ENCODE measurements at regions of chr11 and their contacts with region 1.

Region 1: DNA sequence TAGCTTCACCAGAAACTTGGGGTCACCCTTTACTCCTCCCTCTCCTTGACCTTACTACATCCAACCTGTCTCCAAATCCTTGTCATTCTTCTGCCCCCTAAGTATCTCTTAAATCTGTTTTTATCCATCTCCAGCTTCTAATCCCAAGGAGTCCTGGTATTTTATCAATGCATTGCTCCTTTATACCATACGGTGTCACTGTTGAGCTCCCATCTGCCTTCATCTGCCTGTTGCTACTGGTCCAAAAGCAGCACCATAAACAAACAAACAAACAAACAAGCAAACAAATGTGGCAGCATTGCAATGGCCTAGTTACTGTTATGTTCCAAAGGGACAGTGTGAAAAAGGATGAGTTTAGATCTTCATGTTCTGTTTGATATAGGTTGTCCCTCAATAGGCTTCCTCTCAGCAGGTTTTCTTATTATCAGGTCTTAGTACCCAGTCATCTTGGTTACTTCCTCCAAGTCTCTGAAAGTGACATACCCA is 34.2 kb downstream of the DNHD1 start:
- DNase-seq: no peak
- ATAC-seq: peak; percentile 84
- H3K4me3 Mint-ChIP-seq: no peak overlapping the region
- H3K27ac Mint-ChIP-seq: no peak overlapping the region
- H3K4me1 Mint-ChIP-seq: peaks cover 7% of the 10 kb centered on the region
- H3K27me3 Mint-ChIP-seq: no peaks in the 10 kb centered on the region

Region 2: DNA sequence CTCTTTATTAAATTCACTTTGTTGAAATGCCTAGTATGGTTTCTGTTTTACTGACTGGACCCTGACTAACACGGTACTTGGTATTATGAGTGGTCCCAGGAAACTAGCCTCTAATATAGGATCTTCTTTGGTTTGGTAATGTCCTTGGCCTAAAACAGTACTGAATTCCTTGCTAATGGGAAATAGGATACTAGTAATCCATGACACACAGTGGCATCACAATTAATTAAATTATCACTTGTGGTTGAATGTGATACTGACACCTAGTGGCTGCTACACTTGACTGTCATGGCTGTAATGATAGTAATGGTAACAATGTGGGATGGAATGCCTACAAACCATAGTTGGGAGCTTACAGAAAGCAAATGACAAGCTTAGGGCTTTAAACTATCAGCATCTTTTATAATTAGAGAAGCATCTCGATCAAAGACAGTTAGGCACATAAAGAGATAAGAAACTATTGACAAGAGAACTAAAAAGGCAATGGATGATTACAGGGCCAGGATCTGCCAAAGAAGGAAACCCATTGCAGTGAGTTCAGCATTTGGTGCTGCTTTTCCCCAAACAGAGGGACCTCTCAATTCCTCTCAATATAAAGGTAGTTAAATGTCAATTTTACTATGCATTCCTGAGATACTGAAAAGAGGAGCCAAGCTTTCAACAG is 25.6 kb before region 1 on chr11:
- CTCF ChIA-PET with region 1: interaction called, 10 read pairs
- DNase-seq: no peak
- ATAC-seq: peak; percentile 63
- H3K4me3 Mint-ChIP-seq: no peak overlapping the region
- H3K27ac Mint-ChIP-seq: no peak overlapping the region
- H3K4me1 Mint-ChIP-seq: peaks cover 4% of the 10 kb centered on the region
- H3K27me3 Mint-ChIP-seq: no peaks in the 10 kb centered on the region

Region 3: GRCh38 chr11:6544921-6545850 is 13.9 kb after region 1 on chr11:
- CTCF ChIA-PET with region 1: interaction called, 35 read pairs
- DNase-seq: no peak
- ATAC-seq: no peak
- H3K4me3 Mint-ChIP-seq: no peak overlapping the region
- H3K27ac Mint-ChIP-seq: no peak overlapping the region
- H3K4me1 Mint-ChIP-seq: peaks cover 10% of the 10 kb centered on the region
- H3K27me3 Mint-ChIP-seq: no peaks in the 10 kb centered on the region

Region 4: DNA sequence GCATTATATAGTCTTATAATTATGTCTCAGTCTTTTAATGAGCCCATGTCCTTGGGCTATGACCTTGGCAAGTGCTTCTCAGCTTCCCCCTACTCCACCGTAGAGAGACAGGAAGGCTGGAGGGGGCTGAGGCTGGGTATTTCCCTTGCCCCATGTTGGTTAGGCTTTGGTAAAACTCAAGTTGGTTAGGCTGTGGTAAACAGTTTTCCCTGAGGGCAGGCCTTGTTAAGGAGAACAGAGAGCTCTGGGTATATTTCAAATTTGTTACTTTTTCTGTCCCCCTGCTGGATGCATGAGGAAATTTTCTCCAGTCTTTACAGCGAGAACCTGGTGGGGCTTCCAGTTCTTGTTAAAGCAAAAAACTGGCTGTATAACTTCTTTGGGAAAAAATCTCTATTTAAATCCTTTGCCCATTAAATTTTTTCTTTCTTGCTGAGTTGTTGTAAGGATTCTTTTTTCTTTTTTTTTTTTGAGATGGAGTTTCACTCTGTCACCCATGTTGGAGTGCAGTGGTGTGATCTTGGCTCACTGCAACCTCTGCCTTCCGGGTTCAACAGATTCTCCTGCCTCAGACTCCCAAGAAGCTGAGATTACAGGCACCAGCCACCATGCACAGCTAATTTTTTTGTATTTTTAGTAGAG is 136.5 kb after region 1 on chr11:
- CTCF ChIA-PET with region 1: interaction called, 12 read pairs
- DNase-seq: peak; percentile 69
- ATAC-seq: peak; percentile 69
- H3K4me3 Mint-ChIP-seq: no peak overlapping the region
- H3K27ac Mint-ChIP-seq: peak overlapping the region; percentile 61
- H3K4me1 Mint-ChIP-seq: peaks cover 60% of the 10 kb centered on the region
- H3K27me3 Mint-ChIP-seq: no peaks in the 10 kb centered on the region

Region 5: DNA sequence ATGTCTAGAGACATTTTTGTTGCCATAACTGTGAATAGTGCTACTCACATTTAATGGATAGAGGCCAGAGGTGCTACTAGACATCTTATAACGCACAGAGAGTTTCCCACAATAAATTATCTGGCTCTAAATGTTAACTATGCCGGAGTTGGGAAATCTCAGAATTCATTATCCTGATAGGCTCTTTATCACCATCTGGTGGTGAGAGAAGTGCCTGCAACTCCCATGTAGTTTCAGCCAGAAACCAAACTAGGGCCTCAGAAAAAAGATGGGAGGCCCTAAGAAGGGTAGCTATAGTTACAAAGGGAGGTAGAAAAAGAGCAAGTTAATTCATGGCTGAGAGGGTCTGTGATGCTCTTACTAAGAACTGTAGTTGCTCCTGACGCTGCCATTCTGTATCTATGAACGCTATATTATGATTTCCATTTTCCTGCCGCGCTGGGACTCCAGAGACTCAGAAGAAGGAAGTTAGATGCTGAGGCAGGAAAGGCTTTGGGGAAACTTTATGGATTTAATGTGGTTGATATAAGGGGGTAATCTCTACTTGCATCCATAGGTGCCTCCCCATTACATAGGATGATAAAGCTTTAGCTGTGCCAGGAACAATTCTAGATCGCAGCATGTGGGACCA is 174.7 kb after region 1 on chr11:
- CTCF ChIA-PET with region 1: interaction called, 22 read pairs
- DNase-seq: peak; percentile 51
- ATAC-seq: peak; percentile 51
- H3K4me3 Mint-ChIP-seq: no peak overlapping the region
- H3K27ac Mint-ChIP-seq: peak overlapping the region; percentile 29
- H3K4me1 Mint-ChIP-seq: peaks cover 2% of the 10 kb centered on the region
- H3K27me3 Mint-ChIP-seq: no peaks in the 10 kb centered on the region

Measured in activated CD8-positive, alpha-beta memory T cell treated with anti-CD3 and anti-CD28 coated beads, Interleukin-2, amount 10 ng/mL, durations not matched to agents 7 days and 5 days (primary cell).